ENCODE measurements at regions of chr21 and their contacts with region 1.

Region 1: GRCh38 chr21:35400233-35400957 is 351.3 kb upstream of the RUNX1 start:
- DNase-seq: peak; percentile 39 to 66
- H3K4me3 ChIP-seq: no peak overlapping the region
- H3K4me3 Mint-ChIP-seq: no peak overlapping the region
- H3K27ac Mint-ChIP-seq: no peak overlapping the region
- H3K4me1 ChIP-seq: 0 out of 2 replicates have a peak, but pooled peaks cover 4% of the 10 kb centered on the region
- H3K4me1 Mint-ChIP-seq: no peaks in the 10 kb centered on the region
- H3K27me3 ChIP-seq: no peaks in the 10 kb centered on the region
- H3K27me3 Mint-ChIP-seq: no peaks in the 10 kb centered on the region
- CTCF ChIP-seq: peak; percentile 44 to 51

Region 2: DNA sequence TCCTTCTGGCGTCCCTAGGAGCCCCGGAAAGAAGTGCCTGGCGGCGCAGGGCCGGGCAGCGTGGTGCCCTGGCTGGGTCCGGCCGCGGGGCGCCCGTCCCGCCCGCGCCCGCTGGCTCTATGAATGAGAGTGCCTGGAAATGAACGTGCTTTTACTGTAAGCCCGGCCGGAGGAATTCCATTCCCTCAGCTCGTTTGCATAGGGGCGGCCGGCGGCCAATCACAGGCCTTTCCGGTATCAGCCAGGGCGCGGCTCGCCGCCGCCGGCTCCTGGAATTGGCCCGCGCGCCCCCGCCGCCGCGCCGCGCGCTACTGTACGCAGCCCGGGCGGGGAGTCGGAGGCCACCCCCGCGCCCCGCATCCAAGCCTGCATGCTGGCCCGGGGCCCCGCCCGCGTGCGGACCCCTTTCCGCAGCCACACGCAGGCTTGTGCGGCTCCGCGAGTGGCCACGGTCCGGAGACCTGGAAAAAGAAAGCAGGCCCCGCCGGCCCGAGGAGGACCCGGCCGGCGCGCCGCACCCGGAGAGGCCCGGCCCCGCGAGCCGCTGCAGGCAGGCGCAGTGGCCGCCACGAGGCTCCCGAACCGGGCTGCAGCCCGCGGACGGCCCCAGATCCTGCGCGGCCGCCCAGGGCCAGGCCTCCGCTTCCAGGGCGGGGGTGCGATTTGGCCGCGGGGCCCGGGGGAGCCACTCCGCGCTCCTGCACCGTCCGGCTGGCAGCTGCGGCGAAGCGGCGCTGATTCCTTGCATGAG is 511.7 kb before region 1 on chr21:
- CTCF ChIA-PET with region 1: interaction called, 23 read pairs
- POLR2A ChIA-PET with region 1: interaction called, 6 read pairs
- intact Hi-C with region 1: loop called (anchors 1 kb)
- DNase-seq: peak; percentile 93 to 94
- H3K4me3 ChIP-seq: peak overlapping the region; percentile 78
- H3K4me3 Mint-ChIP-seq: peak overlapping the region; percentile 93
- H3K27ac Mint-ChIP-seq: peak overlapping the region; percentile 83
- H3K4me1 ChIP-seq: no peaks in the 10 kb centered on the region
- H3K4me1 Mint-ChIP-seq: no peaks in the 10 kb centered on the region
- H3K27me3 ChIP-seq: peaks cover 2% of the 10 kb centered on the region; the same call in 1 of the 2 replicates
- H3K27me3 Mint-ChIP-seq: no peaks in the 10 kb centered on the region
- CTCF ChIP-seq: no peak

Region 3: DNA sequence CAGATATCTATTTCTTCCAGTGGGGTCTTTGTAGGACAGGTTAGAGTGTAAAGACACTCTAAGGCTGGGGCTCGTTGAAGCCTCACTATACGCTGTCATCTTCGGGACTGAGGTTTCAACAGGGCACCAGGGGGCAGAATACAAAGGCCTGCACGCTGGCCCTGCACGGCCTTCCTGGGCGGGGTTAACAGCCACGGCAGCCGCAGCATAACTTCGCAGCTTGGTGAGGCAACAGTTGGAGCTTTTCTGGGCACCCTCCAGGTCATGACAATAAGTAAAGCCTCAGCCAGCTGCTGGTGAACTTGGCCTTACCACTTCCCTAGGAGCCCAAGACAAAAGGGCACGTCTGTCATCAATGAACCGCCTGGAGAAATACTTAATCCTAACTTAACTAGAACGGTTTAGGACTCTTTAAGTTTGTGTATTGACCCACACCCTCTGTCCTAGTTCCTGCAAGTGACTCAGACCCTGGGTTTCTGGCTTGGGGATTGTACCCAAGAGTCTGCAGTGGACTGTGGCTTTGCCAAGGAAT is 349.0 kb before region 1 on chr21:
- CTCF ChIA-PET with region 1: interaction called, 3 read pairs
- POLR2A ChIA-PET with region 1: no interaction called
- intact Hi-C with region 1: loop called (anchors 5 kb)
- DNase-seq: peak; percentile 58 to 66
- H3K4me3 ChIP-seq: no peak overlapping the region
- H3K4me3 Mint-ChIP-seq: no peak overlapping the region
- H3K27ac Mint-ChIP-seq: no peak overlapping the region
- H3K4me1 ChIP-seq: peaks cover 14% of the 10 kb centered on the region; the same call in 1 of the 2 replicates
- H3K4me1 Mint-ChIP-seq: peaks cover 16% of the 10 kb centered on the region
- H3K27me3 ChIP-seq: no peaks in the 10 kb centered on the region
- H3K27me3 Mint-ChIP-seq: no peaks in the 10 kb centered on the region
- CTCF ChIP-seq: peak; percentile 23 to 42

Region 4: GRCh38 chr21:35441868-35442582 is 41.6 kb after region 1 on chr21:
- CTCF ChIA-PET with region 1: no interaction called
- POLR2A ChIA-PET with region 1: no interaction called
- intact Hi-C with region 1: no loop called
- DNase-seq: no peak
- H3K4me3 ChIP-seq: no peak overlapping the region
- H3K4me3 Mint-ChIP-seq: no peak overlapping the region
- H3K27ac Mint-ChIP-seq: no peak overlapping the region
- H3K4me1 ChIP-seq: peaks cover 7% of the 10 kb centered on the region; the same call in 1 of the 2 replicates
- H3K4me1 Mint-ChIP-seq: peaks cover 9% of the 10 kb centered on the region
- H3K27me3 ChIP-seq: no peaks in the 10 kb centered on the region
- H3K27me3 Mint-ChIP-seq: no peaks in the 10 kb centered on the region
- CTCF ChIP-seq: peak in 1 of 2 experiments; percentile 6

Region 5: DNA sequence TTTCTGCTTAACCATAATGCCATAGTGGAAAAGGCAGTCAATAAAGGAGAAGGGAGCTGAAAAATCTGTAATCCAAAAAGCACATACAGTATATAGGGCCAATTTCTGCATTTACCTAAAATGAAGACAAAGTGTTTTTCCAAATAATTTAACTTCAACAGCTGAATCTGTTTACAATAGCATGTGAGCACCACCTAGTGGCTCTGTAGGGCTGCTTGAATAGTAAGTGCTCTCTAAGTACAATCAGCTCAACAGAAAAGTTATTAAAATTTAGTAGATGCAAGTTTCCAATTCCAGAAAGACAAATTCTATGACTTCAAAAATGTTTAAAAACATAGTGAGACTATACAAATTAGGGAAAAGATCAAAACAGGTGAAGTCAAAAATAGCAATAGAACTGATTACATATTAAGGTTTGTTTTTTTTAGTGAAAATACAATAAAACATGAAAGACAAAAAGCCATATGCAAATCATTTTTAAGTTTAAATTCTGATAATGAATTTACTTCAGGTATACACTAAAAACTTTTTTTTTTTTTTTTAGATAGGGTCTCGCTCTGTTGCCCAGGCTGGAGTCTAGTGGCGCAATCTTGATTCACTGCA is 439.9 kb after region 1 on chr21:
- CTCF ChIA-PET with region 1: interaction called, 4 read pairs
- POLR2A ChIA-PET with region 1: no interaction called
- intact Hi-C with region 1: loop called (anchors 10 kb)
- DNase-seq: peak; percentile 52 to 54
- H3K4me3 ChIP-seq: no peak overlapping the region
- H3K4me3 Mint-ChIP-seq: no peak overlapping the region
- H3K27ac Mint-ChIP-seq: no peak overlapping the region
- H3K4me1 ChIP-seq: 0 out of 2 replicates have a peak, but pooled peaks cover 4% of the 10 kb centered on the region
- H3K4me1 Mint-ChIP-seq: no peaks in the 10 kb centered on the region
- H3K27me3 ChIP-seq: no peaks in the 10 kb centered on the region
- H3K27me3 Mint-ChIP-seq: no peaks in the 10 kb centered on the region
- CTCF ChIP-seq: peak; percentile 63 to 84

Measured in Caco-2 (cell line).